GM12878 (cell line): ENCODE measurements at regions of chr17 and their contacts with region 1.

Region 1: DNA sequence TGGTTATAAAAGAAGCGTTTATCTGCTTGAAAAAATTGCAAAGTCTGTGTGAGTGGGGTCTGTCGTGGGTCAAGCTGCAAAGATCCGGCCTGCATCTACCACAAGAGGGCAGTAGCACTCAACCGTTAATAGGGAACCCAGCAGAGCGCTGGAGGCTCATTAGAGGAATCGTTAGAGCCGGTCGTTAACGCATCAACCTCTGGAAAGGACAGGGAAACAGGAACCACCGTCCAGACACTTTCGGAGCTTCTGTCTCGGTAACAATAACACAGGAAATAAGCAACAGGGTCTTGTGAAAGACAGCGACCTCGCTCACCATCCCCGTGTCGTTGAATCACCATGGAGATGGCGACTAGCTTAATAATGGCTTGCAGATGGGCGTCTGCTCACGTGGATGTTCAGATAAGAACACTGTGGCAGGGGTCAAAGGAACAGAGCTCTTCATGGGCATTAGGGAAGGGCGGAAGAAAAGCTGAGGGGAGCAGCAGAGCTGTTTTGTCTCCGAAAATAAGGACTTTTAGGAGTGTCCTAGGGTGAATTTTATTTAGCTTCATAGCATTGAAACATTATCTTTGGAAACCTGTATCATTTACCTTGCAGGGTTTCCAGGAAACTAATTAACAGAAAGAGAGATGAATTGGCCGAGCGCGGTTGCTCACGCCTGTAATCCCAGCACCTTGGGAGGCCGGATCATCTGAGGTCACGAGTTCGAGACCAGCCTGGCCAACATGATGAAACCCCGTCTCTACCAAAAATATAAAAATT is 11.9 kb upstream of the NSRP1 start:
- DNase-seq: peak; percentile 46
- ATAC-seq: peak; percentile 100
- H3K4me3 ChIP-seq: peak overlapping the region; percentile 60; the same call in 1 of the 2 replicates
- H3K27ac ChIP-seq: no peak overlapping the region
- H3K4me1 ChIP-seq: 0 out of 2 replicates have a peak, but pooled peaks cover 3% of the 10 kb centered on the region
- H3K27me3 ChIP-seq: no peaks in the 10 kb centered on the region
- CTCF ChIP-seq: peak; percentile 87 to 90 (median 88); a peak in 5 of 6 replicates
- EP300 ChIP-seq: no peak
- POLR2A ChIP-seq: no peak
- RAD21 ChIP-seq: peak; percentile 88

Region 2: DNA sequence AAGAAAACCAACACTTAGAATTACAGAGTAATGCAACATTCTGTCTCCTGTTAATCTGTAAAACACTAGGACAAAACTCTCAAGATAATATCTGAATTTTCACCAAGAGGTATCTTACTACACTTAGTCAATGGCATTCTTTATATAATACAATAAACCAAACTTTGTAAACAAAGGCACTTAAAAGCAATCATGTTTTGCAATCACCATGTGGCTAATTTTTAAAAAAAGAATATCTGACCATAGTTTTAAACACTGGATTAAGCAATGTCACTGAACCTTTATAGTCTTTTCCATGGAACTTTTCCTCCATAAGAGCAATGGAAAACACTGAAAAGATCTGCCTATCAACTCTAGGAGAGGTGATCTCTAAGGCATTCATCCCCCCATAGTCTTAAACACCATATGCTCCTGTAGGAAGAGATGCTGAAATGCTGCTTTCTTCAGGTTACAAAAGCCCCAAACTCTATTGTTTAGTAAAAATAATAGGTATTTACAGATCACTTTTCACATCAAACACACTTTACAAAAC is 337.9 kb before region 1 on chr17:
- CTCF ChIA-PET with region 1: no interaction called
- POLR2A ChIA-PET with region 1: no interaction called
- RAD21 ChIA-PET with region 1: no interaction called
- SMC1A ChIA-PET with region 1: no interaction called
- in situ Hi-C with region 1: no loop called
- intact Hi-C with region 1: no loop called
- DNase-seq: no peak
- ATAC-seq: no peak
- H3K4me3 ChIP-seq: no peak overlapping the region
- H3K27ac ChIP-seq: no peak overlapping the region
- H3K4me1 ChIP-seq: peaks cover 3% of the 10 kb centered on the region; the same call in 1 of the 2 replicates
- H3K27me3 ChIP-seq: no peaks in the 10 kb centered on the region
- CTCF ChIP-seq: no peak
- EP300 ChIP-seq: no peak
- POLR2A ChIP-seq: no peak
- RAD21 ChIP-seq: no peak

Region 3: DNA sequence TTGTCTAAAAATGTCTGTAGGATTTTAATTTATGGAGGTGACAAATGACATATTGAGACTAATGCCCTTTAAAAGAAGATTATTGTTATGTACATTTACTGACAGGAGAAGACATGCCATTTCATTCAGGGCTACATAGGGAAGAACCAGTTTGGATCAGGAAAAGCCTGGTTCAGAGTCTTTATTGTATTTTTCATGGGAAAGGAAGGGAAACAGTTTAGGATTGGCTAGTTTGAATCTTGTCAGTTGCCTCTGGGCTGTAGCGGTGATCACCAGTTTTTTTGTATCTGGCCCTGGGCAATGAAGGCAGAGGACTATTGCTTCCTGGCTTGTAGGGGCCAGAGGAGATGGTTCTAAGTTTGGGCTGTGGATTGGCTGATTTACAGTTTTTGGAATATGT is 43.6 kb after region 1 on chr17:
- CTCF ChIA-PET with region 1: interaction called, 16 read pairs
- POLR2A ChIA-PET with region 1: no interaction called
- RAD21 ChIA-PET with region 1: no interaction called
- SMC1A ChIA-PET with region 1: interaction called, 4 read pairs
- in situ Hi-C with region 1: no loop called
- intact Hi-C with region 1: no loop called
- DNase-seq: no peak
- ATAC-seq: no peak
- H3K4me3 ChIP-seq: no peak overlapping the region
- H3K27ac ChIP-seq: no peak overlapping the region; the same call in 1 of the 2 replicates
- H3K4me1 ChIP-seq: no peaks in the 10 kb centered on the region; the same call in 1 of the 2 replicates
- H3K27me3 ChIP-seq: no peaks in the 10 kb centered on the region
- CTCF ChIP-seq: no peak
- EP300 ChIP-seq: no peak
- POLR2A ChIP-seq: no peak
- RAD21 ChIP-seq: no peak

Region 4: GRCh38 chr17:30203471-30203981 is 98.8 kb after region 1 on chr17:
- CTCF ChIA-PET with region 1: interaction called, 26 read pairs
- POLR2A ChIA-PET with region 1: no interaction called
- RAD21 ChIA-PET with region 1: interaction called, 17 read pairs
- SMC1A ChIA-PET with region 1: interaction called, 12 read pairs
- in situ Hi-C with region 1: no loop called
- intact Hi-C with region 1: no loop called
- DNase-seq: no peak
- ATAC-seq: peak; percentile 87
- H3K4me3 ChIP-seq: no peak overlapping the region
- H3K27ac ChIP-seq: no peak overlapping the region
- H3K4me1 ChIP-seq: peaks cover 16% of the 10 kb centered on the region
- H3K27me3 ChIP-seq: no peaks in the 10 kb centered on the region
- CTCF ChIP-seq: peak; percentile 33 to 41 (median 40); a peak in 5 of 6 replicates
- EP300 ChIP-seq: no peak
- POLR2A ChIP-seq: no peak
- RAD21 ChIP-seq: peak; percentile 40; the same call in 1 of the 2 replicates

Region 5: GRCh38 chr17:30244853-30245385 is 140.2 kb after region 1 on chr17:
- CTCF ChIA-PET with region 1: interaction called, 26 read pairs
- POLR2A ChIA-PET with region 1: no interaction called
- RAD21 ChIA-PET with region 1: interaction called, 7 read pairs
- SMC1A ChIA-PET with region 1: interaction called, 4 read pairs
- in situ Hi-C with region 1: no loop called
- intact Hi-C with region 1: no loop called
- DNase-seq: no peak
- ATAC-seq: no peak
- H3K4me3 ChIP-seq: no peak overlapping the region
- H3K27ac ChIP-seq: no peak overlapping the region
- H3K4me1 ChIP-seq: no peaks in the 10 kb centered on the region
- H3K27me3 ChIP-seq: no peaks in the 10 kb centered on the region
- CTCF ChIP-seq: no peak
- EP300 ChIP-seq: no peak
- POLR2A ChIP-seq: no peak
- RAD21 ChIP-seq: no peak

Region 6: DNA sequence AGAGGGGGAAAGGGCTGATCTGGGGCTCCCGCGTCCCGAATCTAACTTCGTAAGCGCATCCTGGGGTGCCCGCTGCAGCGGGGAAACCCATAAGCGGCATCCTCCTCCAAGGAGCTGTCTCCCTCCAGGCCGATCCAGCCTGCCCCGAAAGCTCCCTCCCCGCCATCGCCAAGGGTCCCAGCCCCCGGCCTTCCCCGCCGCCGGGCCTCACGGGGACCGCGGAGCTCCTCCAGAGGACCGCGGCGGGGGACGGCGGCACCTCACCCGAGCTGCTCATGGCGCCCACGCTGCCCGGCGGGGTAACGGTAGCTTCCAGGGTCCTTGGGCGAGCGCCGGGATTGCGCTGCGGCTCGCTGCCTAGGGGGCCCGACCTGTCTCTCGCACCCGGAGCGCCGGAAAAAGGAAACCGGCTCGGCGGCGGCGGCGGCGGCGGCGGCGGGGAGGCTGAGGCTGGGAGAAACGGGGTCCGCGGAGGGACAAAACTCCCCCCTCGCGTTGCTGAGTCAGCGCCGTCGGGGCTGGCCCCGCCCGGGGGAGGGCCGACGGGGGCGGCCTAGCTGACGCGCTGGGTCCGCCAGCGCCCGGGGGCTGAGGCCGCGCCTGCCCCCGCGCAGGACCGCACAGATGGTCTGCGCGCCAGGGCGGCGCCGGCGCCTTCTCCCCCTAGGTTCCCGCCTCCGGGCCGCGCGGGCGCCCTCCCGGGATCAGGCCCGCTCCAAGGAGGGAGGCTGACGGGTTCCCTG is 187.0 kb after region 1 on chr17 and contains the start of gene BLMH:
- CTCF ChIA-PET with region 1: interaction called, 18 read pairs
- POLR2A ChIA-PET with region 1: no interaction called
- RAD21 ChIA-PET with region 1: interaction called, 7 read pairs
- SMC1A ChIA-PET with region 1: interaction called, 6 read pairs
- in situ Hi-C with region 1: no loop called
- intact Hi-C with region 1: no loop called
- DNase-seq: no peak
- ATAC-seq: peak; percentile 94
- H3K4me3 ChIP-seq: peak within 1 kb of the TSS; percentile 92
- H3K27ac ChIP-seq: peak within 1 kb of the TSS; percentile 59
- H3K4me1 ChIP-seq: no peaks in the 10 kb centered on the region
- H3K27me3 ChIP-seq: no peaks in the 10 kb centered on the region
- CTCF ChIP-seq: no peak
- EP300 ChIP-seq: no peak
- POLR2A ChIP-seq: peak; percentile 84
- RAD21 ChIP-seq: no peak
- polyA plus RNA-seq, gene BLMH: 16.1 to 34.2 TPM

Region 7: GRCh38 chr17:30344283-30345088 is 239.7 kb after region 1 on chr17:
- CTCF ChIA-PET with region 1: interaction called, 345 read pairs
- POLR2A ChIA-PET with region 1: no interaction called
- RAD21 ChIA-PET with region 1: interaction called, 183 read pairs
- SMC1A ChIA-PET with region 1: interaction called, 24 read pairs
- in situ Hi-C with region 1: loop called (anchors 5 kb)
- intact Hi-C with region 1: no loop called
- DNase-seq: no peak
- ATAC-seq: no peak
- H3K4me3 ChIP-seq: no peak overlapping the region
- H3K27ac ChIP-seq: no peak overlapping the region
- H3K4me1 ChIP-seq: peaks cover 8% of the 10 kb centered on the region
- H3K27me3 ChIP-seq: no peaks in the 10 kb centered on the region
- CTCF ChIP-seq: no peak
- EP300 ChIP-seq: no peak
- POLR2A ChIP-seq: no peak
- RAD21 ChIP-seq: no peak